Endothelial cell of umbilical vein (primary cell): ENCODE measurements at regions of chr5 and their contacts with region 1.

Region 1: DNA sequence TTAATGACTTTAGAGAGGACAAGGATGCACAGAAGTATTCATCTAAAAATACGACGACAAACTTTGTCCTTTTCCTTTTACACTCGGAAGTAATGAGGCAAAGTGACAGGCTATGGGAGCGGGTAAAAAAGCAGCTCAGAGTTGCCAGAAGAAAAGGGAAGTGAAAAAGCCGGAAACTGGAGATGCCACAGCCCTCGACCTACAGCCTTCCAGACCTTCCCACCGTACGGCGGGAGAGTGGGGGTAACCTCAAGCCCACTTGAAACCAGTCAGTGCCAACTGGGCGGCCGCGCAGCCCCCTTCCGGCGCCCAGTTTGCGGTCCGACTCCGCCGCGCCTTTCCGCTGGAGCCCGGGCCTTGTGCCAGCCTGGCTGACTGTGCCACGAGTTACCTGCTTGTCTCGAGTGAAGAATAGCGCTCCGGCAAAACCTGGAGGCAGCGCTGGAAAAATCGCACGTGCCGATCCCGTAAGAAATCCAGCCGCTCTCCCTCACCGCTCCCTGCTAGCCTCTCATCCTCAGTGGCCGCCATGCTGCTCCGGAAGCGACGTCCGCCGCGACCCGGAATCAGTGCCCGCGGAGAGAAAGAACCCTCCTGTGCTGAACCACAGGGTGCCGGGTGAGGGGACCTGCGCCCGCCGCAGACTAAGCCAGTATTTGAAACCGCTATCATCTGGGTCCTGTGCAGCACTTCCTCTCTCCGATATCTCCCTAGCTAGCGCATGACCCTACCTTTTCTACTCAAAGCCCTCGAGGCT is at the start of gene PGGT1B:
- DNase-seq: peak; percentile 77
- H3K4me3 ChIP-seq: peak within 1 kb of the TSS; percentile 48 to 100 (median 100)
- H3K27ac ChIP-seq: peak within 1 kb of the TSS; percentile 64
- H3K4me1 ChIP-seq: peaks cover 15% of the 10 kb centered on the region
- H3K27me3 ChIP-seq: no peaks in the 10 kb centered on the region
- CTCF ChIP-seq: no peak
- POLR2A ChIP-seq: peak; percentile 89
- total RNA-seq, gene PGGT1B: 37.5 and 42.3 TPM in 2 replicates

Region 2: DNA sequence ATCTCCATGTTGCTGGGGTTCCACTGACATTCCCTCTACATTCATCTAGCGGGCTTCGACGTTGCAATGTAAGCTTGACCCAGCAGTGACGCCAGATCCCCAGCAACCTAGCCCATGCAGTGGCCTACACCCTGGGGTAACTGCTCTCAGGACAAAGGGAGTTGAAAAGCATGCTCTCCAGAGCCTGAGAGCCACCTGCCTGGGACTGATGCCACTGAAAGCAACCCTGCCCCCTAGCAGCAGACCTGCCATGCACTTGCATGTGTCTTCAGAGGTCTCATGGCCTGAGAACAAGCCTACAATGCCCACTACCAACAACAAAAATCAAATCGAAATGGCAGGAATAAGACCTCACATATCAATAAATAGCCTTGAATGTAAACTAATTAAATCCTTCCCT is 423.1 kb before region 1 on chr5:
- CTCF ChIA-PET with region 1: no interaction called
- POLR2A ChIA-PET with region 1: no interaction called
- dilution Hi-C with region 1: no loop called
- intact Hi-C with region 1: no loop called
- DNase-seq: no peak
- H3K4me3 ChIP-seq: no peak overlapping the region
- H3K27ac ChIP-seq: no peak overlapping the region
- H3K4me1 ChIP-seq: no peaks in the 10 kb centered on the region
- H3K27me3 ChIP-seq: no peaks in the 10 kb centered on the region
- CTCF ChIP-seq: no peak
- POLR2A ChIP-seq: no peak

Region 3: GRCh38 chr5:115296124-115297022 is 33.9 kb after region 1 on chr5 and contains the start of gene CCDC112:
- CTCF ChIA-PET with region 1: interaction called, 4 read pairs
- POLR2A ChIA-PET with region 1: no interaction called
- dilution Hi-C with region 1: no loop called
- intact Hi-C with region 1: loop called (anchors 2 kb)
- DNase-seq: peak; percentile 75
- H3K4me3 ChIP-seq: peak within 1 kb of the TSS; percentile 91 to 93 (median 92)
- H3K27ac ChIP-seq: peak within 1 kb of the TSS; percentile 3
- H3K4me1 ChIP-seq: peaks cover 9% of the 10 kb centered on the region
- H3K27me3 ChIP-seq: peaks cover 0 to 2% of the 10 kb centered on the region in 2 experiments
- CTCF ChIP-seq: peak in 1 of 2 donors; percentile 9
- POLR2A ChIP-seq: peak; percentile 85
- total RNA-seq, gene CCDC112: 9.6 TPM in 2 replicates